GM23248 (cell line): ENCODE measurements at regions of chr7 and their contacts with region 1.

Region 1: GRCh38 chr7:100691676-100692577 is 2.1 kb downstream of the GIGYF1 start:
- DNase-seq: peak; percentile 84
- H3K4me3 ChIP-seq: peak overlapping the region; percentile 89
- H3K27ac ChIP-seq: no peak overlapping the region
- H3K4me1 ChIP-seq: peaks cover 17% of the 10 kb centered on the region
- H3K27me3 ChIP-seq: no peaks in the 10 kb centered on the region

Region 2: GRCh38 chr7:100478966-100479665 is 212.8 kb before region 1 on chr7 and contains the start of gene TSC22D4:
- in situ Hi-C with region 1: loop called (anchors 10 kb)
- DNase-seq: peak; percentile 92
- H3K4me3 ChIP-seq: peak within 1 kb of the TSS; percentile 93
- H3K27ac ChIP-seq: peak within 1 kb of the TSS; percentile 64
- H3K4me1 ChIP-seq: peaks cover 11% of the 10 kb centered on the region; the same call in 1 of the 2 replicates
- H3K27me3 ChIP-seq: no peaks in the 10 kb centered on the region
- total RNA-seq, gene TSC22D4: 18.6 and 30.7 TPM in 2 replicates

Region 3: GRCh38 chr7:100889761-100890634 is 198.1 kb after region 1 on chr7:
- in situ Hi-C with region 1: no loop called
- DNase-seq: peak; percentile 97
- H3K4me3 ChIP-seq: peak overlapping the region; percentile 72
- H3K27ac ChIP-seq: peak overlapping the region; percentile 56
- H3K4me1 ChIP-seq: peaks cover 11% of the 10 kb centered on the region
- H3K27me3 ChIP-seq: peaks cover 2% of the 10 kb centered on the region

Region 4: GRCh38 chr7:100991631-100992030 is 299.7 kb after region 1 on chr7:
- in situ Hi-C with region 1: no loop called
- DNase-seq: no peak
- H3K4me3 ChIP-seq: no peak overlapping the region
- H3K27ac ChIP-seq: no peak overlapping the region
- H3K4me1 ChIP-seq: no peaks in the 10 kb centered on the region
- H3K27me3 ChIP-seq: no peaks in the 10 kb centered on the region